Heart right ventricle (tissue), 16 donors: ENCODE measurements at regions of chr4 and their contacts with region 1.

Region 1: DNA sequence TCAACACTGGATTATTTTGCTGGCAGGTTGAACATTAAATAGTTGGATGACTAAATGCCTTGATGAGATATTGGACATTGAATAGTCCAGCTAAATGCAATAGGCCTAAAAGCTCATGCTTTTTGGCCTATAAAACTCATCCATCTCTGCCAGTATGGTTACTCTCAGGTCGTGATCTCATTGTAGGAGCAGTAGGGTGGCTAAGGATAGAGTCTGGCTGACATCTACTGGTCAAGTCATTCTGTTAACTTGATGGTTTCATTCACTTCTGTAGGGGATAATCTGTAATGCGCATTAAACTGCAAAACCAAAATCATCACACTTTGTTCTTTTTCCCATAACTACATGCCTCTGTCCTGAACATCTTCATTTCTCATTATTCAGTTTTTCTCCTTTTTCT is 227.0 kb downstream of the DKK2 start:
- DNase-seq: no peak
- ATAC-seq: no peak
- H3K4me3 ChIP-seq: no peak overlapping the region
- H3K27ac ChIP-seq: no peak overlapping the region
- H3K4me1 ChIP-seq: no peaks in the 10 kb centered on the region
- H3K27me3 ChIP-seq: no peaks in the 10 kb centered on the region
- CTCF ChIP-seq: peak in 4 of 9 donors; percentile 19 to 46 (median 33)

Region 2: GRCh38 chr4:106717091-106717490 is 92.0 kb before region 1 on chr4:
- intact Hi-C with region 1: no loop called
- DNase-seq: no peak
- ATAC-seq: no peak
- H3K4me3 ChIP-seq: no peak overlapping the region
- H3K27ac ChIP-seq: no peak overlapping the region
- H3K4me1 ChIP-seq: no peaks in the 10 kb centered on the region
- H3K27me3 ChIP-seq: no peaks in the 10 kb centered on the region
- CTCF ChIP-seq: no peak

Region 3: GRCh38 chr4:106738121-106738520 is 71.0 kb before region 1 on chr4:
- intact Hi-C with region 1: no loop called
- DNase-seq: no peak
- ATAC-seq: no peak
- H3K4me3 ChIP-seq: no peak overlapping the region
- H3K27ac ChIP-seq: no peak overlapping the region
- H3K4me1 ChIP-seq: no peaks in the 10 kb centered on the region
- H3K27me3 ChIP-seq: no peaks in the 10 kb centered on the region
- CTCF ChIP-seq: no peak

Region 4: DNA sequence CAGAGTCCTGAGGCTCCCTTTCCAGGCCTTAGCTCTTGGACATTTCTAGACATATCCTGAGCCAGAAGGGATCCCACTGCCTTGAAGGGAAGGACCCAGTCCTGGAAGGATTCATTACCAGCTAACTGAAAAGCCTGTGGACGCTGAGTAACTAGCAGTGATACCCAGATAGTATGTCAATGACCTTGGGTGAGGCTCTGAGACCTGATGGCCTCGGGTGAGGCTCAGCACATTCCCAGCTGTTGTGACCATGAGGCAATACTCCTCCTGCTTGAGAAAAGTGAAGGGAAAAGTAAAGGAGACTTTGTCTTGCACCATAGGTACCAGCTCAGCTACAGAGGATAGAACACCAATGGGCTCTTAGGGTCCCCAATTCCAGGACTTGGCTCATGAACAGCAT is 41.1 kb before region 1 on chr4:
- intact Hi-C with region 1: loop called in 1 of 10 experiments (anchors 1 kb)
- DNase-seq: no peak
- ATAC-seq: no peak
- H3K4me3 ChIP-seq: no peak overlapping the region
- H3K27ac ChIP-seq: no peak overlapping the region
- H3K4me1 ChIP-seq: no peaks in the 10 kb centered on the region
- H3K27me3 ChIP-seq: no peaks in the 10 kb centered on the region
- CTCF ChIP-seq: no peak